Activated naive CD4-positive, alpha-beta T cell treated with anti-CD3 and anti-CD28 coated beads for 36 hours (primary cell): ENCODE measurements at regions of chr2 and their contacts with region 1.

Region 1: DNA sequence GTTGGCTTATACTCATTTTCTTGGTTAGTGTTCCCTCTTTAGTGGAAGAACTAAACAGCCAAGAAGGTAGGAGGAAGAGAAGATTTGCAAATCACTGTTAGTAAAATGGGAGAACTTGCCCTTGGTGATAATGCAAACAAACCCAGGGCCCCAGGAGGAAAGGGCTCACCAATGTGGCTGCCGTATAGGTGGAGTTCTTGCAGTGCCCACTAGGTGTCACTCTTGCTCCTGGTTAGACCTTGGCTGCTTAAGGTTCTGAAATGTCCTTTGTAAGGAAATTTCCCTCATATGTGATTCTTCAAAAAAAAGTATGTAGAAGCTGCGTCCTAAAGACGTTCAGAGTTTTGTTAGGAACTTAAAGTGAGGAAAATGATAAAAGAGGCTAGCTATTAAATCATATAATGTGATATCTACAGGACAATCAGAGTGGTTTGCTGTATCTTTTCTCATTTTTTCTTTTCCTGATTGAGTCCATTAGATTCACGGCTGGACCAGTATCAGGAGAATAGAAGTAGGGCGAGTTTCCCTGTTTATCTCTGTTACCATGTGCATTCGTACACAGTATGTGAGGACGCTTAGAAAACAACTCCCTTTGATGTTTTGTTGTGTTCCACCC is 48.6 kb downstream of the RPIA start:
- DNase-seq: peak; percentile 87
- H3K4me3 Mint-ChIP-seq: no peak overlapping the region
- H3K27ac Mint-ChIP-seq: peak overlapping the region; percentile 4
- H3K4me1 Mint-ChIP-seq: peaks cover 27% of the 10 kb centered on the region
- H3K27me3 Mint-ChIP-seq: no peaks in the 10 kb centered on the region

Region 2: GRCh38 chr2:88765154-88765900 is 25.2 kb after region 1 on chr2:
- CTCF ChIA-PET with region 1: interaction called, 3 read pairs
- intact Hi-C with region 1: loop called (anchors 1 kb)
- DNase-seq: peak; percentile 73
- H3K4me3 Mint-ChIP-seq: peak overlapping the region; percentile 77
- H3K27ac Mint-ChIP-seq: peak overlapping the region; percentile 27
- H3K4me1 Mint-ChIP-seq: peaks cover 11% of the 10 kb centered on the region
- H3K27me3 Mint-ChIP-seq: peaks cover 13% of the 10 kb centered on the region

Region 3: GRCh38 chr2:88874063-88874657 is 134.1 kb after region 1 on chr2:
- CTCF ChIA-PET with region 1: interaction called, 3 read pairs
- intact Hi-C with region 1: loop called (anchors 1 kb)
- DNase-seq: peak; percentile 71
- H3K4me3 Mint-ChIP-seq: no peak overlapping the region
- H3K27ac Mint-ChIP-seq: no peak overlapping the region
- H3K4me1 Mint-ChIP-seq: no peaks in the 10 kb centered on the region
- H3K27me3 Mint-ChIP-seq: peaks cover 3% of the 10 kb centered on the region

Region 4: GRCh38 chr2:88919087-88919738 is 179.1 kb after region 1 on chr2:
- CTCF ChIA-PET with region 1: no interaction called
- intact Hi-C with region 1: loop called (anchors 1 kb)
- DNase-seq: peak; percentile 23
- H3K4me3 Mint-ChIP-seq: no peak overlapping the region
- H3K27ac Mint-ChIP-seq: no peak overlapping the region
- H3K4me1 Mint-ChIP-seq: no peaks in the 10 kb centered on the region
- H3K27me3 Mint-ChIP-seq: peaks cover 7% of the 10 kb centered on the region